CD8-positive, alpha-beta T cell (primary cell): ENCODE measurements at regions of chr13 and their contacts with region 1.

Region 1: GRCh38 chr13:48303359-48304142 is at the start of gene RB1:
- DNase-seq: peak; percentile 81 to 97 (median 90)
- ATAC-seq: peak; percentile 79
- H3K4me3 ChIP-seq: peak within 1 kb of the TSS; percentile 83 to 95
- H3K4me3 Mint-ChIP-seq: peak within 1 kb of the TSS; percentile 98
- H3K27ac ChIP-seq: peak within 1 kb of the TSS; percentile 97 to 99
- H3K27ac Mint-ChIP-seq: peak within 1 kb of the TSS; percentile 97
- H3K4me1 ChIP-seq: peaks cover 17% of the 10 kb centered on the region
- H3K4me1 Mint-ChIP-seq: peaks cover 39% of the 10 kb centered on the region
- H3K27me3 ChIP-seq: no peaks in the 10 kb centered on the region
- H3K27me3 Mint-ChIP-seq: no peaks in the 10 kb centered on the region
- CTCF ChIP-seq: no peak
- total RNA-seq, gene RB1: 11.5 to 12.5 TPM

Region 2: DNA sequence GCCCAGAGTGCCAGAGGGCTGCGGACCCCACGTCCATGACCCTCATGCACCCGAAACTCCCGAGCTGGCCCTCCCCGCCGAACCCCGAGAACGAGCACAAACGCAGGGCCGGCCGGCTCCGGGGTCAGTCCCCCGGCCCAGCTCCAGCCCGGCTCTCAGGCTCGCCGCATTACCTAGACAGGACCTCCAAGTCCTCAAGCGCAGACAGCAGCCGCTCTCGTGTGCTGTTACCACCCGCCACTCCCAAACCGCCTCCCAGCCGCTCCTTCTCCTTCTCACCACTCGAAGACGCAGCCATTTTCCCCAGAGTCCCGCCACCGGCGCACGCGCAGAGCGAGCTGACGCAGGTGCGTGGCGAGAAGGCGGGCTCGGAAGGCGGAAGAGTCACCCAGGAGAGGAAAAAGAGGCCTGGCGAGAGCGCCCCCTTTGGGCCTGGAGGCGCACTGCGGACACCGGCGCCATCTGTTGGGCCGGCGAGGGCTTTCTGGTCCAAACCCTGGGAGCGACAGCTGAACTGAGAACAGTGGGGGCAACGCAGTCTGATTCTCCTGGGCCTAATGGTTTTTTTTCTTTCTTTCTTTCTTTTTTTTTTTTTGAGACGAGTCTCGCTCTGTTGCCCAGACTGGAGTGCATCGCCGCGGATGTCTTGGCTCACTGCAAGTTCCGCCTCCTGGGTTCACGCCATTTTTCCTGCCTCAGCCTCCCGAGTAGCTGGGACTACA is 208.6 kb before region 1 on chr13 and contains the start of gene MED4:
- CTCF ChIA-PET with region 1: interaction called, 5 read pairs
- POLR2A ChIA-PET with region 1: interaction called, 4 read pairs
- intact Hi-C with region 1: loop called (anchors 1 kb)
- DNase-seq: peak; percentile 96 to 99 (median 97)
- ATAC-seq: peak; percentile 98
- H3K4me3 ChIP-seq: peak within 1 kb of the TSS; percentile 90 to 96
- H3K4me3 Mint-ChIP-seq: peak within 1 kb of the TSS; percentile 96
- H3K27ac ChIP-seq: peak within 1 kb of the TSS; percentile 90 to 92
- H3K27ac Mint-ChIP-seq: peak within 1 kb of the TSS; percentile 97
- H3K4me1 ChIP-seq: peaks cover 21% of the 10 kb centered on the region
- H3K4me1 Mint-ChIP-seq: peaks cover 45% of the 10 kb centered on the region
- H3K27me3 ChIP-seq: no peaks in the 10 kb centered on the region
- H3K27me3 Mint-ChIP-seq: no peaks in the 10 kb centered on the region
- CTCF ChIP-seq: peak; percentile 100
- total RNA-seq, gene MED4: 60.8 to 63.6 TPM

Region 3: GRCh38 chr13:48233046-48233907 is 70.3 kb before region 1 on chr13 and contains the start of gene ITM2B:
- CTCF ChIA-PET with region 1: no interaction called
- POLR2A ChIA-PET with region 1: no interaction called
- intact Hi-C with region 1: loop called (anchors 1 to 5 kb)
- DNase-seq: peak; percentile 40 to 86 (median 64)
- ATAC-seq: peak; percentile 72
- H3K4me3 ChIP-seq: peak within 1 kb of the TSS; percentile 96 to 98
- H3K4me3 Mint-ChIP-seq: peak within 1 kb of the TSS; percentile 98
- H3K27ac ChIP-seq: peak within 1 kb of the TSS; percentile 92 to 94
- H3K27ac Mint-ChIP-seq: peak within 1 kb of the TSS; percentile 99
- H3K4me1 ChIP-seq: peaks cover 44% of the 10 kb centered on the region
- H3K4me1 Mint-ChIP-seq: peaks cover 62% of the 10 kb centered on the region
- H3K27me3 ChIP-seq: no peaks in the 10 kb centered on the region
- H3K27me3 Mint-ChIP-seq: no peaks in the 10 kb centered on the region
- CTCF ChIP-seq: peak; percentile 59
- total RNA-seq, gene ITM2B: 280 to 308 TPM

Region 4: GRCh38 chr13:48275507-48275906 is 28.0 kb before region 1 on chr13:
- CTCF ChIA-PET with region 1: no interaction called
- POLR2A ChIA-PET with region 1: no interaction called
- intact Hi-C with region 1: no loop called
- DNase-seq: no peak
- ATAC-seq: no peak
- H3K4me3 ChIP-seq: no peak overlapping the region
- H3K4me3 Mint-ChIP-seq: no peak overlapping the region
- H3K27ac ChIP-seq: no peak overlapping the region
- H3K27ac Mint-ChIP-seq: no peak overlapping the region
- H3K4me1 ChIP-seq: no peaks in the 10 kb centered on the region
- H3K4me1 Mint-ChIP-seq: no peaks in the 10 kb centered on the region
- H3K27me3 ChIP-seq: no peaks in the 10 kb centered on the region
- H3K27me3 Mint-ChIP-seq: no peaks in the 10 kb centered on the region
- CTCF ChIP-seq: no peak

Region 5: DNA sequence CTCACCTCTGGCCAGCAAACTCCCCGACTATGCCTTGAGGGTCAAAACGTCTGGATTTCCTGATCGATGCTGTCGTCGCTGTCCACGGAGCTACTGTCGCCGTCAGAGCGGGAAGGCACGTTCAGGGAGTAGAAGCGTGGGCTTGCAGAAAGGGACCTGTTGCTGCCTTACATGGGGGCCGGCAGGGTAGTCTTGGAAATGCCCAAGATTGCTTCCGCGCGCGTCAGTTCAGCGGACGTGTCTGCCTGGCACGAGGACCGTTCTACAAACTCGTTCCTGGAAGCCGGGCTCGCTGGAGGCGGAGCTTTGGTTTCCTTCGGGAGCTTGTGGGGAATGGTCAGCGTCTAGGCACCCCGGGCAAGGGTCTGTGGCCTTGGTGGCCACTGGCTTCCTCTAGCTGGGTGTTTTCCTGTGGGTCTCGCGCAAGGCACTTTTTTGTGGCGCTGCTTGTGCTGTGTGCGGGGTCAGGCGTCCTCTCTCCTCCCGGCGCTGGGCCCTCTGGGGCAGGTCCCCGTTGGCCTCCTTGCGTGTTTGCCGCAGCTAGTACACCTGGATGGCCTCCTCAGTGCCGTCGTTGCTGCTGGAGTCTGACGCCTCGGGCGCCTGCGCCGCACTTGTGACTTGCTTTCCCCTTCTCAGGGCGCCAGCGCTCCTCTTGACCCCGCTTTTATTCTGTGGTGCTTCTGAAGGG is 15.4 kb after region 1 on chr13:
- CTCF ChIA-PET with region 1: no interaction called
- POLR2A ChIA-PET with region 1: interaction called, 7 read pairs
- intact Hi-C with region 1: loop called (anchors 2 kb)
- DNase-seq: peak in 4 of 9 experiments; percentile 19 to 53 (median 32)
- ATAC-seq: peak; percentile 30
- H3K4me3 ChIP-seq: peak overlapping the region; percentile 26 to 40
- H3K4me3 Mint-ChIP-seq: peak overlapping the region; percentile 80
- H3K27ac ChIP-seq: no peak overlapping the region
- H3K27ac Mint-ChIP-seq: no peak overlapping the region
- H3K4me1 ChIP-seq: peaks cover 6% of the 10 kb centered on the region
- H3K4me1 Mint-ChIP-seq: peaks cover 22% of the 10 kb centered on the region
- H3K27me3 ChIP-seq: no peaks in the 10 kb centered on the region
- H3K27me3 Mint-ChIP-seq: no peaks in the 10 kb centered on the region
- CTCF ChIP-seq: no peak

Region 6: DNA sequence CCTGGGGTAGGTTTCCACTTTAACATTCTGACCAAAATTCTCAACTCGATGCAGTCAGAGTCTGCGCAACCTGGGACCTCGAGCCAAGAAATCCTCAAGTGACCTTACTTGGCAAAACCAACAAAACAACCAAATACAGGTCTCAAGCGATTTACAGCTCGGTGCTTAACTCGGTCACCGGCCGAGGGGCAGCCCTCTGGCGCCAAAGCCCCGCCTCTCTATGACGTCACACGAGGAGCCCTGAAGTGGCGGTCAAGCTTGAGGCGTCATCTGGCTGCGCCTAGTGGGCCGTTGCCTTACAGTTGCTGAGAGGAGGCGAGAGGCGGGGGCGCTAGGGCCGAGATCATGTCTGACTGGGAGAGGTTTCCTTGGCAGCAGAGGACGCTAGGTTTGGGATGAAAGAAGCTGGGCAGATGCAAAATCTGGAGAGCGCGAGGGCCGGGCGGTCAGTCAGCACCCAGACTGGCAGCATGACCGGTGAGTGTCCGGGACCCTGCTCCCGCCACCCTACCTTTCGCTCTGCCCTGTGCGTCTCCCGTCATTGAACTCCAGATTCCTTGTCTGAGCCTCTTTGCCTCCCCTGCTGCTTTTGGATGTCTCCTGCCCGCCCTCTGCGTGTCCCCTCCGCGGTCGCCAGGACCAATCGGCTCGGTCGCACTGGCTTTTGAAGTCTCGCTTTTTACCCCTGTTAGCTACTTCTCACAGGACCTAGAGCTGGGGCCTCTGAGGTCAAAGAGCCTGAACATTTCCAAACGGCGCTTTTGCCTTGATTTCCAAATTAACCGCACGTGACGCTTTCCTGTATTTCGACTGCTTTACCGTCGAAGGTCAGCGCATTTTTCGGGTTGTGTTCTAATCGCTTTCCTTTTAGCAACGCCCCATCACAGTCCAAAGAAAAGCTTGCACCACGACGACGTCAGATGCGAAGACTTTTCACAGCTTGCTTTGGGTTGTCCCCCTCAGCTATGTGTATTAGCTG is 944.4 kb after region 1 on chr13 and contains the start of gene CDADC1:
- CTCF ChIA-PET with region 1: no interaction called
- POLR2A ChIA-PET with region 1: no interaction called
- intact Hi-C with region 1: loop called in 1 of 2 experiments (anchors 5 kb)
- DNase-seq: peak; percentile 73 to 93 (median 87)
- ATAC-seq: peak; percentile 74
- H3K4me3 ChIP-seq: peak within 1 kb of the TSS; percentile 83 to 99
- H3K4me3 Mint-ChIP-seq: peak within 1 kb of the TSS; percentile 92
- H3K27ac ChIP-seq: peak within 1 kb of the TSS; percentile 80 to 93
- H3K27ac Mint-ChIP-seq: peak within 1 kb of the TSS; percentile 90
- H3K4me1 ChIP-seq: peaks cover 8% of the 10 kb centered on the region
- H3K4me1 Mint-ChIP-seq: peaks cover 54% of the 10 kb centered on the region
- H3K27me3 ChIP-seq: no peaks in the 10 kb centered on the region
- H3K27me3 Mint-ChIP-seq: no peaks in the 10 kb centered on the region
- CTCF ChIP-seq: no peak
- total RNA-seq, gene CDADC1: 15.9 to 17.2 TPM